ENCODE measurements at regions of chr13 and their contacts with region 1.

Region 1: GRCh38 chr13:38657191-38657590 is 29.7 kb upstream of the FREM2 start:
- DNase-seq: no peak
- CTCF ChIP-seq: no peak

Region 2: GRCh38 chr13:38641164-38641951 is 15.8 kb before region 1 on chr13:
- CTCF ChIA-PET with region 1: interaction called, 10 read pairs
- POLR2A ChIA-PET with region 1: no interaction called
- DNase-seq: no peak
- CTCF ChIP-seq: no peak

Region 3: DNA sequence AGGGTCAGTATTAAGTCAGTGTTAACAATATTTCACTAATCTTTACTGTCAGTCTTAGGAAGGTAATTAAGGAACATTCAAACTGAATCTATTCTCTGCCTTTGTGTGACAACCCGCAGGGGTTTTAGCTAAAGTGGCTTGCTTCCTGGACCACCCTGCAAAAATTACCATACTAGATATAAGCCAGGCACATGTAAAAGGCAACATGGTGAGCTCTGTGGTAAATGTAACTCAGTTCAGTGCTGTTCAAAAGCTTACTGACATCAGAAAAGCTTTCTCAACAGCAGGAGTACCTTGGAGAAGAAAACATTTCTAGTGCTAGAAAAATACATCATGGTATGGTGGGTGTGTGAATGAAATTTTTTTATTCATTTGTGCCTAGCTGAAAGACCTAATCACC is 146.4 kb after region 1 on chr13:
- CTCF ChIA-PET with region 1: no interaction called
- POLR2A ChIA-PET with region 1: no interaction called
- DNase-seq: no peak
- CTCF ChIP-seq: no peak